PC-9 (cell line): ENCODE measurements at regions of chr12 and their contacts with region 1.

Region 1: GRCh38 chr12:120292661-120293531 is at the start of gene RNU4-1:
- DNase-seq: peak; percentile 81 to 97
- H3K4me3 ChIP-seq: peak within 1 kb of the TSS; percentile 64
- H3K27ac ChIP-seq: peak within 1 kb of the TSS; percentile 99
- H3K4me1 ChIP-seq: peaks cover 19% of the 10 kb centered on the region
- H3K27me3 ChIP-seq: no peaks in the 10 kb centered on the region
- CTCF ChIP-seq: no peak
- total RNA-seq, gene RNU4-1: 1,857 and 3,341 TPM in 2 replicates

Region 2: DNA sequence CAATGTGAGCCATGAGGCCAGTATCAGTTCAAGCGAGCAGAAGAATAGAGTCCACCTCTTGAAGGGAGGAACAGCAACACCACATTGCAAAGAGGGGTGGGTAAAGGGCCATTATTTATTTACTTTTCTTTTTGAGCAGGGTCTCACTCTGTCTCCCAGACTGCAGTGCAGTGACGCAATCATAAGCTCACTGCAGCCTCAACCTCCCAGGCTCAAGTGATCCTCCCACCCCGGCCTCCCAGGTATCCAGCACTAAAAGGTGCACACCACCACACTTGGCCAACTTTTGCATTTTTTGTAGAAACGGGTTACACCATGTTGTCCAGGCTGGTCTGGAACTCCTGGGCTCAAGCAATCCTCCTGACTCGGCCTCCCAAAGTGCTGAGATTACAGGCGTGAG is 372.8 kb before region 1 on chr12:
- CTCF ChIA-PET with region 1: no interaction called
- POLR2A ChIA-PET with region 1: no interaction called
- intact Hi-C with region 1: no loop called
- DNase-seq: no peak
- H3K4me3 ChIP-seq: no peak overlapping the region
- H3K27ac ChIP-seq: no peak overlapping the region
- H3K4me1 ChIP-seq: peaks cover 2% of the 10 kb centered on the region
- H3K27me3 ChIP-seq: no peaks in the 10 kb centered on the region
- CTCF ChIP-seq: no peak

Region 3: GRCh38 chr12:120116792-120117651 is 175.9 kb before region 1 on chr12:
- CTCF ChIA-PET with region 1: no interaction called
- POLR2A ChIA-PET with region 1: interaction called, 10 read pairs
- intact Hi-C with region 1: loop called (anchors 5 kb)
- DNase-seq: peak; percentile 70 to 98
- H3K4me3 ChIP-seq: peak overlapping the region; percentile 85
- H3K27ac ChIP-seq: peak overlapping the region; percentile 69
- H3K4me1 ChIP-seq: peaks cover 28% of the 10 kb centered on the region
- H3K27me3 ChIP-seq: no peaks in the 10 kb centered on the region
- CTCF ChIP-seq: no peak

Region 4: DNA sequence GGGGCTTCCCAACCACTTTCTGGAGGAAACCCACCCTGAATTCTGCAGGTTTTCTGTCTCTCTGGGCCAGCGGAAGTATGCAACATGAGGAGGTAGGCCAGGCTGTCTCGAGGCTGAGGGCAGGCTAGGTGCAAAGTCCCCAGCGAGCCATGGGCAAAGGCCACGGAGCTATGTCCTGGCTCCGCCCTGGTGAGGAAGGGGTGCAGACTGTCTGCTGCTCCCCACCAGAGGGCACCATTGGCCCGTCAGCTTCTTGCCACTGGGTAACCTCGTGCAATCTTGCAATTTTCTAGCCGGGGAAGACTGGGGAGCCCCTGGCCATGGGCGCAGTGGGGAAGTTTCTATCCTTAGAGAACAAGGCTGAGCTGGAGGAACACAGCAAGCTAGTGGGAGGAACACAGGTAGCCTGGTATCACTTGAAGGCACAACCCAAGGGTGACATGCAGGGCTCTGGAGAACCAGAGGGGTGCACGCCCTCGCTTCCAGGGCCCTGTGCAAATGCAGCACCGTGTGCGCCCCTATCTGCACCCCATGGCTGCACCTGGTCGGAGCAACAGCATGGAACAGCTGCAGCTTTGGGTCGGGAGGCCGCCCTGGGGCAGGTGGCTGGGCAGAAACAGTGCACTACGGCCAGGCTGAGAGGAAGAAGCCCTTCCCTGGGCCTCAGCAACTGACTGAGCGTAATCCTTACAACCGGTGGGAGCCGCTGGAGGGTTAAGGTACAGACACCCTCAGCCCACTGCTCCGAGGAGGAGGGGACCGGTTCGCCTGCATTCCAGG is 64.4 kb before region 1 on chr12:
- CTCF ChIA-PET with region 1: interaction called, 16 read pairs
- POLR2A ChIA-PET with region 1: interaction called, 222 read pairs
- intact Hi-C with region 1: loop called (anchors 1 kb)
- DNase-seq: peak; percentile 80 to 92
- H3K4me3 ChIP-seq: peak overlapping the region; percentile 54; the same call in 1 of the 2 replicates
- H3K27ac ChIP-seq: peak overlapping the region; percentile 99
- H3K4me1 ChIP-seq: peaks cover 53% of the 10 kb centered on the region
- H3K27me3 ChIP-seq: no peaks in the 10 kb centered on the region
- CTCF ChIP-seq: peak; percentile 81

Region 5: GRCh38 chr12:120257041-120257821 is 35.7 kb before region 1 on chr12:
- CTCF ChIA-PET with region 1: no interaction called
- POLR2A ChIA-PET with region 1: interaction called, 24 read pairs
- intact Hi-C with region 1: no loop called
- DNase-seq: peak in 1 of 2 experiments; percentile 66
- H3K4me3 ChIP-seq: no peak overlapping the region
- H3K27ac ChIP-seq: 0 out of 2 replicates have a peak overlapping the region, but pooled peaks have one; percentile 34
- H3K4me1 ChIP-seq: peaks cover 34% of the 10 kb centered on the region
- H3K27me3 ChIP-seq: no peaks in the 10 kb centered on the region
- CTCF ChIP-seq: no peak

Region 6: GRCh38 chr12:120317224-120318105 is 24.6 kb after region 1 on chr12:
- CTCF ChIA-PET with region 1: no interaction called
- POLR2A ChIA-PET with region 1: interaction called, 8 read pairs
- intact Hi-C with region 1: loop called (anchors 2 kb)
- DNase-seq: peak; percentile 99
- H3K4me3 ChIP-seq: peak overlapping the region; percentile 82
- H3K27ac ChIP-seq: peak overlapping the region; percentile 73
- H3K4me1 ChIP-seq: no peaks in the 10 kb centered on the region
- H3K27me3 ChIP-seq: no peaks in the 10 kb centered on the region
- CTCF ChIP-seq: no peak; the same call in 1 of the 2 replicates

Region 7: GRCh38 chr12:120352117-120352516 is 59.2 kb after region 1 on chr12:
- CTCF ChIA-PET with region 1: no interaction called
- POLR2A ChIA-PET with region 1: no interaction called
- intact Hi-C with region 1: no loop called
- DNase-seq: no peak
- H3K4me3 ChIP-seq: no peak overlapping the region
- H3K27ac ChIP-seq: no peak overlapping the region
- H3K4me1 ChIP-seq: peaks cover 3% of the 10 kb centered on the region; the same call in 1 of the 2 replicates
- H3K27me3 ChIP-seq: no peaks in the 10 kb centered on the region
- CTCF ChIP-seq: no peak

Region 8: DNA sequence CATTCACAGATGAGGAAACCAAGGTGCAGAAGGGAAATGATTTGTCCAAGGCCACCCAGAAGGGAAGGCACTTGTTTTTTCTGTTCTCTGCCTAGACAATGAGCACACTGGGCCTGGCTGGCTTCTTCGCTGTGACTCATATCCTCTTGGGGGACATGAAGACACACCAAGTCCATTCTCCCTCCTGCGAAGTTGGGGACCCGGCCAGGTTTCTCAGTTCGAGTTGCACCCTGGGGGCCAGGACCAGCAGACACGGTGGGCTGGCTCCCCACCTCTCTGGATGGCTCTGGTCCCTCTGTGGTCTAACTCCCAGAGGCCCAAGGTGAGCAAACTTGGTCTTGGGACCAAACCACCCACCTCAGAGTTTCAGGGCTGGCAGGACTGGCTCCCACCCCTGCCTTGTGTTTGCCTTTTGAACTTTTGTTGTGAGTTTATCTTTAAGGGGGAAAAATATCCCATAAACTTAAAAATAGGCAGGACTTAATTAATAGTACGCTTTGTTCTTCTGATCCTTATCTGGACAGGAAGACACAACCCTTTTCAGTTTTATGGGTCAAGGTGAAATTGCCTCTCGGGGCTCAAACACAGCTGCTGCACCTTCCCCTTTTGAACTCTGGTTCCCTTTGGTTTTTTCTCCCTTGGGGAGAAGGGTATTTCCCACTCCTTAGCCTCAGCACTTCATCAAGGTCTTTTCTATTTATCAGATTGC is 385.0 kb after region 1 on chr12:
- CTCF ChIA-PET with region 1: no interaction called
- POLR2A ChIA-PET with region 1: interaction called, 24 read pairs
- intact Hi-C with region 1: no loop called
- DNase-seq: no peak
- H3K4me3 ChIP-seq: no peak overlapping the region
- H3K27ac ChIP-seq: no peak overlapping the region
- H3K4me1 ChIP-seq: peaks cover 10% of the 10 kb centered on the region; the same call in 1 of the 2 replicates
- H3K27me3 ChIP-seq: no peaks in the 10 kb centered on the region
- CTCF ChIP-seq: no peak

Region 9: DNA sequence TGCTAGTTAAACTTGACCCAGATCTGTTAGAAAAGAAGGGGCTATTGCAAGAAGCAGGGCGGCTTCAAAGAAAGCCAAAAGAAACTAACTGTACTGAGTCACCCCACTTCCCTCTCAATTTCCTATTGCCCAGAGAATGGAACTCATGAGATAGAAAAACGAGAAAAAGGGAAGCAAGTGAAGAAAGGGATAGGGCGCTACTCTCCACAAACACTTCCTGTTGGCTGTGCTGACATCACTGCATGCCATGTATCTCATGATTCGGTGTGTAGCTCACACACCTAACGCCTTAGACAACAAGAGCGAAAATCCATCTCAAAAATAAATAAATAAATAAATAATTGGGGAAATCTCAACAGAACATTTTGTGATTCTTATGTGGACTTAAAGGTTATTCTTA is 904.0 kb after region 1 on chr12:
- CTCF ChIA-PET with region 1: no interaction called
- POLR2A ChIA-PET with region 1: no interaction called
- intact Hi-C with region 1: no loop called
- DNase-seq: no peak
- H3K4me3 ChIP-seq: no peak overlapping the region
- H3K27ac ChIP-seq: no peak overlapping the region
- H3K4me1 ChIP-seq: no peaks in the 10 kb centered on the region
- H3K27me3 ChIP-seq: no peaks in the 10 kb centered on the region
- CTCF ChIP-seq: no peak